Heart left ventricle (tissue), 16 donors: ENCODE measurements at regions of chr2 and their contacts with region 1.

Region 1: GRCh38 chr2:9748577-9748976 is 94.7 kb upstream of the TAF1B start:
- DNase-seq: no peak
- ATAC-seq: no peak
- H3K4me3 ChIP-seq: no peak overlapping the region
- H3K27ac ChIP-seq: no peak overlapping the region
- H3K4me1 ChIP-seq: peaks cover 0 to 19% (median 12%) of the 10 kb centered on the region in 12 donors
- H3K27me3 ChIP-seq: no peaks in the 10 kb centered on the region
- CTCF ChIP-seq: no peak
- POLR2A ChIP-seq: no peak

Region 2: DNA sequence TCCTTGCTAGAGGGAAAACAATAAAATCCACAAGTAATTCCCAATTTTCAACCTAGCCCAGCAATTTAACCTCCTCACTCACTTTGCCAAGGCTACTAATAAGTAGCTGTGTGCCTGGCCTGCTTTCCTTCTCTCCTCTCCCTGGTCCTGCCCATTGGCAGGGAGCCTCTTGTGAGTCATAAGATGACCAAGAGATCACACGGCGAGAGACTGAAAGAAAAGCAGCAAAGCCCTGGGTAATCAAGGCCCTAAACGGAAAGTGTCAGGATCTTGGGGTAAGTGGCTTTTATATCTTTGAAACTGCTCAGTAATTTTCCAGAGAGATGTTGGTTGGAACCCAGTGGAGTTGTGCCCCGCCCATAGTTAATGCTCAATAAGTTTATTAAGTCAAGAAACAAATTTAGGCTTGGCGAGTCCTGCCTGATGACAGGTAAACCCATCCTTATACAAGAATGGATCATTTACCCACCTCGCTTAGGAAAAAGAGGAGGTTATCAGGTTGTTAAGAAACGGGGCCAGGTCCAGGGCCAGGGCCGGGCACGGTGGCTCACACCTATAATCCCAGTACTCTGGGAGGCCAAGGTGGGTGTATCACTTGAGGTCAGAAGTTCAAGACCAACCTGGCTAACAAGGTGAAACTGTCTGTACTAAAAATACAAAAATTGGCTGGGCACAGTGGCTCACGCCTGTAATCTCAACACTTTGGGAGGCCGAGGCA is 183.0 kb before region 1 on chr2:
- intact Hi-C with region 1: loop called in 1 of 10 experiments (anchors 10 kb)
- DNase-seq: peak in 4 of 5 donors; percentile 72 to 85 (median 82)
- ATAC-seq: peak; percentile 76 to 97 (median 94)
- H3K4me3 ChIP-seq: peak overlapping the region in 5 of 12 donors; percentile 7 to 32 (median 19)
- H3K27ac ChIP-seq: peak overlapping the region in 11 of 12 donors; percentile 36 to 85 (median 69)
- H3K4me1 ChIP-seq: peaks cover 0 to 18% (median 7%) of the 10 kb centered on the region in 12 donors
- H3K27me3 ChIP-seq: no peaks in the 10 kb centered on the region
- CTCF ChIP-seq: no peak
- POLR2A ChIP-seq: no peak

Region 3: GRCh38 chr2:9836524-9836923 is 87.9 kb after region 1 on chr2:
- intact Hi-C with region 1: no loop called
- DNase-seq: no peak
- ATAC-seq: no peak
- H3K4me3 ChIP-seq: no peak overlapping the region
- H3K27ac ChIP-seq: no peak overlapping the region
- H3K4me1 ChIP-seq: no peaks in the 10 kb centered on the region
- H3K27me3 ChIP-seq: peaks cover 0 to 6% (median 0%) of the 10 kb centered on the region in 9 donors
- CTCF ChIP-seq: no peak
- POLR2A ChIP-seq: no peak

Region 4: GRCh38 chr2:9846554-9846953 is 98.0 kb after region 1 on chr2:
- intact Hi-C with region 1: no loop called
- DNase-seq: no peak
- ATAC-seq: no peak
- H3K4me3 ChIP-seq: no peak overlapping the region
- H3K27ac ChIP-seq: no peak overlapping the region
- H3K4me1 ChIP-seq: peaks cover 0 to 38% (median 8%) of the 10 kb centered on the region in 12 donors
- H3K27me3 ChIP-seq: no peaks in the 10 kb centered on the region
- CTCF ChIP-seq: no peak
- POLR2A ChIP-seq: no peak